ENCODE measurements at regions of chr6 and their contacts with region 1.

Region 1: DNA sequence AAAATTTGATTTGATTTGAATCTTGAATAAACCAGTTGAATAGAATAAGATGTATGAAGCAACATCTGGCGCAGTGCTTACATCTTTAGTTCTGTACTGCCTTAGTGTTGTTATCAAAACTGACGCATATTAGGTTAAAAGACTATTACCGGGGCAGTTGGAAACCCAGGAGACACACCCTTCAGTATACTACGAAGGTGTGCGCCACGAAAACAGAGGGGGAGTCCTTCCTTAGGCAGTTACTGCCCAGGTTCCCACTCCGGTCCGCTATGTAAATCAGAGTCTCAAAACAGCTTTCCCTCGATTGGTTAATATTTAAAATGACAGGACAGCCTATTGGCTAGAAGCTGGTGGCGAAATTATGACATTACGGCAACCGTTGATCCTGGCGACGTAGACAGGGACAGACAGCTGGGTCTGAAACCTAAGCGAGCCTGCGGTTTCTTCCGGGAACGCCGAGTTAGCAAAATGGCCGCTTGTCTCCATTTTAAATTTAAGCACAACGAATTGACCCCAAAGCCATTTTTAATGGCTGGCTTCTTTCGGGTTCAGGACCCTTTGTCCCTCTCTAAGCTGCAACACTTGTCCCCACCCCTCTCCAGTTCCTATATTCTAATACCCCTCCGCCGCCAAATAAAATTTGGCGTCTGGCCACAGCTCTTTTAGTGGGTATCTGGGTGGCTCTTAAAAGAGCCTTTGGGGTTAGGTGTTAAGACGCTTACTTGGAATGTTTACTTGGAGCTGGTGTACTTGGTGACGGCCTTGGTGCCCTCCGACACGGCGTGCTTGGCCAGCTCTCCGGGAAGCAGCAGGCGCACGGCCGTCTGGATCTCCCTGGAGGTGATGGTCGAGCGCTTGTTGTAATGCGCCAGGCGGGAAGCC is 35.8 kb downstream of the HFE start:
- DNase-seq: peak; percentile 79 to 97 (median 95)
- H3K4me3 ChIP-seq: peak overlapping the region; percentile 90
- H3K4me3 Mint-ChIP-seq: peak overlapping the region; percentile 92 to 100 (median 97)
- H3K27ac ChIP-seq: peak overlapping the region; percentile 97
- H3K27ac Mint-ChIP-seq: peak overlapping the region; percentile 95 to 99 (median 98)
- H3K4me1 ChIP-seq: peaks cover 26% of the 10 kb centered on the region
- H3K4me1 Mint-ChIP-seq: peaks cover 30 to 40% (median 38%) of the 10 kb centered on the region in 3 donors
- H3K27me3 ChIP-seq: no peaks in the 10 kb centered on the region
- H3K27me3 Mint-ChIP-seq: peaks cover 0 to 10% of the 10 kb centered on the region in 2 donors

Region 2: GRCh38 chr6:25942561-25943147 is 180.4 kb before region 1 on chr6:
- CTCF ChIA-PET with region 1: no interaction called
- POLR2A ChIA-PET with region 1: no interaction called
- DNase-seq: peak in 2 of 5 donors; percentile 18 to 29
- H3K4me3 ChIP-seq: no peak overlapping the region
- H3K4me3 Mint-ChIP-seq: no peak overlapping the region
- H3K27ac ChIP-seq: no peak overlapping the region
- H3K27ac Mint-ChIP-seq: no peak overlapping the region
- H3K4me1 ChIP-seq: no peaks in the 10 kb centered on the region
- H3K4me1 Mint-ChIP-seq: peaks cover 2 to 7% (median 4%) of the 10 kb centered on the region in 3 donors
- H3K27me3 ChIP-seq: no peaks in the 10 kb centered on the region
- H3K27me3 Mint-ChIP-seq: peaks cover 3 to 10% of the 10 kb centered on the region in 2 donors

Region 3: DNA sequence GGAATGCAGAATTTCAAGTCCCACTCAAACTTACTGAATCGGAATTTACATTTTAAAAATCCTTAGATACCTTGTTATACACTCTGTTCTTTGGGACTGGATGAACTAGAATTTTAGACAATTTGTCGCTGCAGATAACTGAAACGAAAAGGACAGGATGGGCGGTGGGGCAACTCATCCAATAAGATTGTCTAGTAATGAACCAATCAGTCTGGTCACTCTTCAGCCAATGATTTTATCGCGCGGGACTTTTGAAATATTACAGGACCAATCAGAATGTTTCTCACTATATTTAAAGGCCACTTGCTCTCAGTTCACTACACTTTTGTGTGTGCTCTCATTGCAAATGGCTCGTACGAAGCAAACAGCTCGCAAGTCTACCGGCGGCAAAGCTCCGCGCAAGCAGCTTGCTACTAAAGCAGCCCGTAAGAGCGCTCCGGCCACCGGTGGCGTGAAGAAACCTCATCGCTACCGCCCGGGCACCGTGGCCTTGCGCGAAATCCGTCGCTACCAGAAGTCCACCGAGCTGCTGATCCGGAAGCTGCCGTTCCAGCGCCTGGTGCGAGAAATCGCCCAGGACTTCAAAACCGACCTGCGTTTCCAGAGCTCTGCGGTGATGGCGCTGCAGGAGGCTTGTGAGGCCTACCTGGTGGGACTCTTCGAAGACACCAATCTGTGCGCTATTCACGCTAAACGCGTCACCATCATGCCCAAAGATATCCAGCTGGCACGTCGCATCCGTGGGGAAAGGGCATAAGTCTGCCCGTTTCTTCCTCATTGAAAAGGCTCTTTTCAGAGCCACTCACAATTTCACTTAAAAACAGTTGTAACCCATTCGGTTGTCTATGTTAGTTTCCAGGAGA is 77.7 kb before region 1 on chr6:
- CTCF ChIA-PET with region 1: interaction called, 16 read pairs
- POLR2A ChIA-PET with region 1: interaction called, 116 read pairs
- DNase-seq: peak; percentile 58 to 90 (median 85)
- H3K4me3 ChIP-seq: peak overlapping the region; percentile 77
- H3K4me3 Mint-ChIP-seq: peak overlapping the region; percentile 87 to 94 (median 92)
- H3K27ac ChIP-seq: peak overlapping the region; percentile 71
- H3K27ac Mint-ChIP-seq: peak overlapping the region; percentile 94 to 99 (median 98)
- H3K4me1 ChIP-seq: peaks cover 10% of the 10 kb centered on the region
- H3K4me1 Mint-ChIP-seq: peaks cover 20 to 32% (median 30%) of the 10 kb centered on the region in 3 donors
- H3K27me3 ChIP-seq: no peaks in the 10 kb centered on the region
- H3K27me3 Mint-ChIP-seq: no peaks in the 10 kb centered on the region

Region 4: DNA sequence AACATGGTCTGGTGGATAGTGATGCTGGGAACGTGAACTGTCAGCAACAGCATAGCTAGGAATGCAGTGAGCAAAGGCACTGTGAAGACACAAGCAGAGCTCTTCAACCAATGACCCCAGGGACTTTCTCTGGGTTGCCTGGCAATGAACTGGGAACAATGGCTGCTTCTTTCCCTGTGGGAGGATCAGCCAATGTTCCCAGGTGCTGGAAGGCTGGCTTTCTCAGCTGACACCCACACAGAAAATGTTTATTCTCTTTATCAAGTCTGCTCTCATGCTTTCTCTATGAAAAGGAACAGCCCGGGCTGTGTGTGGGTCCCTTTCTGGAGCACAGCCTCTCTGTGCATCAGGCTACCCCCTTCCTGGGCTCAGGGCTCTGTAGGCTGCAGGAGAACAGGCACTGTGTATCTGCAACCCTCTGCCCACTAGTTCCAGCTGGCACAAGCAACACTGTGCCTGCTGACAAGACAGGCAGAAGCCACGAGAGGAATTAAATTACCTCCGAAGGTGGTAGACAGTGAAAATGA is 18.4 kb after region 1 on chr6:
- CTCF ChIA-PET with region 1: interaction called, 5 read pairs
- POLR2A ChIA-PET with region 1: interaction called, 16 read pairs
- DNase-seq: no peak
- H3K4me3 ChIP-seq: no peak overlapping the region
- H3K4me3 Mint-ChIP-seq: no peak overlapping the region
- H3K27ac ChIP-seq: no peak overlapping the region
- H3K27ac Mint-ChIP-seq: no peak overlapping the region
- H3K4me1 ChIP-seq: no peaks in the 10 kb centered on the region
- H3K4me1 Mint-ChIP-seq: peaks cover under 1 to 4% (median 2%) of the 10 kb centered on the region in 3 donors
- H3K27me3 ChIP-seq: no peaks in the 10 kb centered on the region
- H3K27me3 Mint-ChIP-seq: no peaks in the 10 kb centered on the region

Region 5: GRCh38 chr6:26204332-26205165 is 81.5 kb after region 1 on chr6:
- CTCF ChIA-PET with region 1: interaction called, 62 read pairs
- POLR2A ChIA-PET with region 1: interaction called, 286 read pairs
- DNase-seq: peak; percentile 75 to 95 (median 87)
- H3K4me3 ChIP-seq: peak overlapping the region; percentile 73
- H3K4me3 Mint-ChIP-seq: no peak overlapping the region
- H3K27ac ChIP-seq: peak overlapping the region; percentile 99
- H3K27ac Mint-ChIP-seq: no peak overlapping the region
- H3K4me1 ChIP-seq: peaks cover 31% of the 10 kb centered on the region
- H3K4me1 Mint-ChIP-seq: peaks cover 18 to 31% (median 20%) of the 10 kb centered on the region in 3 donors
- H3K27me3 ChIP-seq: no peaks in the 10 kb centered on the region
- H3K27me3 Mint-ChIP-seq: peaks cover 0 to 8% of the 10 kb centered on the region in 2 donors

Region 6: GRCh38 chr6:26249957-26250697 is 127.1 kb after region 1 on chr6:
- CTCF ChIA-PET with region 1: interaction called, 9 read pairs
- POLR2A ChIA-PET with region 1: interaction called, 34 read pairs
- DNase-seq: peak; percentile 58 to 89 (median 77)
- H3K4me3 ChIP-seq: peak overlapping the region; percentile 94
- H3K4me3 Mint-ChIP-seq: peak overlapping the region; percentile 95 to 99 (median 97)
- H3K27ac ChIP-seq: peak overlapping the region; percentile 74
- H3K27ac Mint-ChIP-seq: peak overlapping the region; percentile 56 to 96 (median 93)
- H3K4me1 ChIP-seq: peaks cover 10% of the 10 kb centered on the region
- H3K4me1 Mint-ChIP-seq: peaks cover 36 to 58% (median 48%) of the 10 kb centered on the region in 3 donors
- H3K27me3 ChIP-seq: no peaks in the 10 kb centered on the region
- H3K27me3 Mint-ChIP-seq: no peaks in the 10 kb centered on the region

Region 7: DNA sequence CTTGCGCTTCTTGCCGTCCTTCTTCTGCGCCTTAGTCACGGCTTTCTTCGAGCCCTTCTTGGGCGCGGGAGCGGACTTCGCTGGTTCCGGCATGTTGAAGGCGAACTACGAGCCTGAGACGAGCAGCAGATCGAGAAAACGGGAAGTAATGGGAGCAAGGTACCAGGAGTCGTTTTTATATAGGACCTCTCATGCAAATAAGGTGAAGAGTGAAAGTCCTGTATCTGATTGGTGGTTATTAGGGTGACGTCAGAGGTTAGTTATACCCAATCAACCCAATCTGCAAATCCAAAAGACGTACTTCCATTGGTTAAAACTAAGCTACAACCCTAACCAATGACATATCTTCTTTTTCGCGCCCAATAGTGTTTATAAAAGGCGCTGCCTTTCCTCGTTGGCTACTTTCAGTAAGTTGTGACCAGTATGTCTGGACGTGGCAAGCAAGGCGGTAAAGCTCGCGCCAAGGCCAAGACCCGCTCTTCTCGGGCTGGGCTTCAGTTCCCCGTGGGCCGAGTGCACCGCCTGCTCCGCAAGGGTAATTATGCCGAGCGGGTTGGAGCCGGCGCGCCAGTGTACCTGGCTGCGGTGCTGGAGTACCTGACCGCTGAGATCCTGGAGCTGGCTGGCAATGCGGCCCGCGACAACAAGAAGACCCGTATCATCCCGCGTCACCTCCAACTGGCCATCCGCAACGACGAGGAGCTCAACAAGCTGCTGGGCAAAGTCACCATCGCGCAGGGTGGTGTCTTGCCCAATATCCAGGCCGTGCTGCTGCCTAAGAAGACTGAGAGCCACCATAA is 1023.9 kb after region 1 on chr6:
- CTCF ChIA-PET with region 1: interaction called, 3 read pairs
- POLR2A ChIA-PET with region 1: interaction called, 21 read pairs
- DNase-seq: peak; percentile 42 to 93 (median 89)
- H3K4me3 ChIP-seq: peak overlapping the region; percentile 97
- H3K4me3 Mint-ChIP-seq: no peak overlapping the region
- H3K27ac ChIP-seq: peak overlapping the region; percentile 91
- H3K27ac Mint-ChIP-seq: no peak overlapping the region
- H3K4me1 ChIP-seq: peaks cover 20% of the 10 kb centered on the region
- H3K4me1 Mint-ChIP-seq: peaks cover 7 to 21% (median 10%) of the 10 kb centered on the region in 3 donors
- H3K27me3 ChIP-seq: no peaks in the 10 kb centered on the region
- H3K27me3 Mint-ChIP-seq: no peaks in the 10 kb centered on the region

Measured in CD8-positive, alpha-beta memory T cell (primary cell).